Activated T-helper 1 cell treated with anti-CD3 and anti-CD28 coated beads, Interleukin-12 subunit alpha, Interleukin-12 subunit beta, Interleukin-2, Interleukin-4 antibody, amounts not matched to agents 30 ng/mL and 10 ng/mL and 1 ng/mL, durations not matched to agents 14 hours and 24 hours and 36 hours (primary cell): ENCODE measurements at regions of chr3 and their contacts with region 1.

Region 1: GRCh38 chr3:187738331-187739093 is 6.8 kb downstream of the BCL6 start:
- DNase-seq: peak; percentile 67
- H3K4me3 Mint-ChIP-seq: peak overlapping the region; percentile 96
- H3K27ac Mint-ChIP-seq: peak overlapping the region; percentile 92
- H3K4me1 Mint-ChIP-seq: peaks cover 71% of the 10 kb centered on the region
- H3K27me3 Mint-ChIP-seq: no peaks in the 10 kb centered on the region

Region 2: DNA sequence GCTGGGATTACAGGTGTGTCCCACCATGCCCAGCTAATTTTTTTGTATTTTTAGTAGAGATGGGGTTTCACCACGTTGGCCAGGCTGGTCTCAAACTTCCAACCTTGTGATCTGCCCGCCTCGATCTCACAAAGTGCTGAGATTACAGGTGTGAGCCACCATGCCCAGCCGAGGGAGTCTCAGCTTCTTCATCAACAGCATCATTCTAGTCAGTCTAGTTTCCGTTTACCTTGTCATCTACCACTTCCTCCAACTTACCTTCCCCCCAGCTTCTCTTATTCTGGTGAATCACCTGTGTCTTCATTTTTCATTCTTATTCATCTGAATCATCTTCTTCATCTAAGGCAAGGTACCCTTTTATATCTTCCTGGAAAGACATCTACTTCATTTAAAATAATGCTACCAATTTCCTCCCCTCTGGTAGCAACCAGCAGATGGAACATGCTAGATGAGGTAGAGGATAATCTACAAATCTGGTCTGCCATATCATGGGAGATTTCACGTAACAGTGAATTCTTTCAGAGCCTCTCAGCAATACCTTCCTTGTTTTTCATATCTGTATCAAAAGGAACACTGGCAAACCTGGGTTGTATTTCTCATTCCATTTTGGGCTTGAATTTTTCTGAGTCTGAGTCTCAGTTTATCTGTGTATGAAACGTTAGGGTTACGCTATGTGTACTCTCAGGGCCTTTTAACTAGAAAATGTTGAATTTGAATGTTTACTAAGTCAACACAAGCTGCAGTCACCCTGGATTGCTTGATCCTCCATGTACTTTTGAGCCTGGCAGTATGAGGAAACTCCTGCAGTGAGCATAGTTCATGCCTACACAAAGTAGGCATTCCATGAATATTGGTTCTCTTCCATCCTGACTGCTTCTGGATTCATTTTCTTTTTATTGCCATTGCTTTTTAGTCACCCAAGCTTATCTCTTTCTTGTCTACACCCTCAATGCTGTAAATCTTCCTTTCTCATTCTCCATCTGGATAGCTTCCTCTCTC is 432.2 kb after region 1 on chr3:
- intact Hi-C with region 1: loop called (anchors 5 kb)
- DNase-seq: no peak
- H3K4me3 Mint-ChIP-seq: peak overlapping the region; percentile 9
- H3K27ac Mint-ChIP-seq: peak overlapping the region; percentile 49
- H3K4me1 Mint-ChIP-seq: peaks cover 52% of the 10 kb centered on the region
- H3K27me3 Mint-ChIP-seq: no peaks in the 10 kb centered on the region

Region 3: DNA sequence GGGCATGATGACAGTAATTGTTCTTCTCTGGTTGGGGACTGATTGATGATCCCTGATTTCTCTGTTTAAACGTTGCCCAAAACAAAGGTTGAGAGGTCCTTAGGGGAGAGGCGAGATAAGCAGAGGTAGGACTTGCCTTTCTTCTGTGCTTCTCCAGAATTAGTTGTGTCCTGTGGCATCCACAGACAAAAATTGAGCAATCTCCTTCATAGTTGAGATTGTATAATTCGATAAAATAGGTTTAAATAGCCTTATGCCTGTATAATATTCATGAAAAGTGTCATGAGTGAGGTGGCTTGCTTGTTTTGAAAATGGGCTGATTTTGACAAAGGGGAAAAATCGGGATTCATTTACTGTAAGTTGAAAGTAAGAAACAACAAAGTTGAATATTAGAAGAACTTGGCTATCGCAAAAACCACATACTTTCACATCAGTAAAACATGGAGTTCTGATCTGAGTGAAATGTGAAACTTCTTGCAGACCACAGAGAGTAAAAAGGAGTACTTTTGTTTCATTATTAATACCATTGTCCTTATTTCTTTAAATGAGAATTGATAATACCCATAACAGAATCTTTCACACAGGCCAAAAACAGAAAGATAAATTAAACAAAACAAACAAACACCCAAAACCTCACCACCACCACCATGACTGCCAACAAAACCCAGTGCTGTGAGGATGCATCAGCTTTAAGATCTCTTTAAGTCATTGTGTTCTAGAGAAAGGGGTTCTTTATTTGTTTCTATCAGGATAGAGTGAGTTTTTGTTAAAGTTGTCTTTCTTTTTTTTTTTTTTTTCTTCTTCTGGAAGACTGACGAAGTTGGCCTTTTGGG is 571.1 kb after region 1 on chr3:
- intact Hi-C with region 1: loop called (anchors 1 kb)
- DNase-seq: no peak
- H3K4me3 Mint-ChIP-seq: peak overlapping the region; percentile 40
- H3K27ac Mint-ChIP-seq: peak overlapping the region; percentile 64
- H3K4me1 Mint-ChIP-seq: peaks cover 35% of the 10 kb centered on the region
- H3K27me3 Mint-ChIP-seq: peaks cover 9% of the 10 kb centered on the region

Region 4: DNA sequence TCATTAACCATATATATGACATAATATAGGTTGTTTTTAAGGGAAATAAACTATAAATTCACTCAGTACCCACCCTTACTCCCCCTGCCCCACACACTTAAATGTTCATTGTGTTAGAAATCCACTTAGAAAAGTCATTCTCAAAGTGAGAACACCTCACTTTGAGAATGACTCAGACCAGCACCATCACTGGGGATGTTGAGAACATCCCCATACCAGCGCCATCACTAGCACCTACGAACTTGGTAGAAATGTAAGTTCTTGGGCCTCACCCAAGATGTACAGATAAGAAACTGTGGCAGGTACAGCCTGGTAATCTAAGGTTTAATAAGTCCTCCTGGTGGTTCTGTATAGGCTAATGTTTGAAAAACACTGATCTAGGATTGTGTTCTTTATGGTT is 778.0 kb after region 1 on chr3:
- intact Hi-C with region 1: loop called (anchors 2 kb)
- DNase-seq: no peak
- H3K4me3 Mint-ChIP-seq: no peak overlapping the region
- H3K27ac Mint-ChIP-seq: no peak overlapping the region
- H3K4me1 Mint-ChIP-seq: peaks cover 5% of the 10 kb centered on the region
- H3K27me3 Mint-ChIP-seq: no peaks in the 10 kb centered on the region

Region 5: DNA sequence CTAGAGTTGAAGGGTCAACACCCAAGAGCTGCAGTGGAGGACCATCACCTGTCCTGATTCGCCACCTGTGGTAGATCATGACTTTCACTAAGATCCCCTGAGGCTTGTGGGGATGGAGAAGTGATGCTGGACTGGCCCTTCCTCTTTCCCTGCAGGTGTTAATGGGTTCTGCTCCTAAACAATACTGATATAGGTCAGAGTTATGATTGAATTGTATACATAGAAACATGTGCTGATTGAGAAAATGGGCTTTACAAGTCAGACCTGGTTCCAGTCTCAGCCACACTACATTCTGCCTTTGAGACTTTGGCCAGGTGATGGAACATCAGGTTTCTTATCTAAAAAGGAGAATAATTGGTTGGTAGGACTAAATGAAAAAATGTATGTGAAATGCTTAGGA is 1014.3 kb after region 1 on chr3:
- intact Hi-C with region 1: loop called (anchors 1 kb)
- DNase-seq: no peak
- H3K4me3 Mint-ChIP-seq: no peak overlapping the region
- H3K27ac Mint-ChIP-seq: peak overlapping the region; percentile 60
- H3K4me1 Mint-ChIP-seq: peaks cover 33% of the 10 kb centered on the region
- H3K27me3 Mint-ChIP-seq: peaks cover 2% of the 10 kb centered on the region

Region 6: DNA sequence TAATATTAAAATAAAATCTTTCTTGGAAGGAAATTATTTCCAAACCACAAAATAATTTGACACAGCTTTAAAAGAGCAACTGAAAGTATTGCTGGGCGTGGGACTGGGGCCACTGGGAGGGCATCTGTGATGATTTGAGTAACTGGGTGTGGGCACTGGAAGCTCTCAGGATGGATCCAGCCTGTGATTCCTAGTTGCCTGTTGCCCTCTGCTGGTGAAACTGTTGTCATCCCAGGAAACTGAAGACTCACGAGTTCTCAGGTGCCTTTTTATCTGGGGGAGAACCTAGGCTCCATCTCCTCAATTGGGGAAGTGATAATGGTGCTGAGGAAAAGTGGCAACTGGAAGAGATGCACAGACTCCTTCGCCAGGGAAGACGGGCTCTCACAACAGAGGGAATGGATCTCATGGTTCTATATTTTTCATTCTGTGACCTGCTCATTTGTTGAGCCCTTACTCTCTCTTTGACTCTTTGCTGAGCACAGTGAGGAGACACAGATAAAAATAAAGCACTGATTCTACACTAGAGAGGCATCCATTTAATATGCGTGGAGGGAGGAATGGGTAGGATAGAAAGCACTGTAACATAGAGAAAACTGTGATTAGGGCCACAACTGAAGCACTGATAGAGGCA is 1494.8 kb after region 1 on chr3:
- intact Hi-C with region 1: loop called (anchors 10 kb)
- DNase-seq: no peak
- H3K4me3 Mint-ChIP-seq: no peak overlapping the region
- H3K27ac Mint-ChIP-seq: no peak overlapping the region
- H3K4me1 Mint-ChIP-seq: peaks cover 24% of the 10 kb centered on the region
- H3K27me3 Mint-ChIP-seq: peaks cover 12% of the 10 kb centered on the region